ENCODE measurements at regions of chr2 and their contacts with region 1.

Region 1: GRCh38 chr2:121530212-121530705 is 421 bp upstream of the RNU4ATAC start:
- DNase-seq: peak in 1 of 2 donors; percentile 90
- ATAC-seq: peak; percentile 71 to 86 (median 73)
- H3K4me3 ChIP-seq: peak overlapping the region; percentile 97
- H3K4me3 Mint-ChIP-seq: peak overlapping the region; percentile 89
- H3K27ac ChIP-seq: peak overlapping the region; percentile 100
- H3K27ac Mint-ChIP-seq: peak overlapping the region; percentile 92 to 98
- H3K4me1 ChIP-seq: peaks cover 21% of the 10 kb centered on the region
- H3K4me1 Mint-ChIP-seq: peaks cover 35 to 44% of the 10 kb centered on the region in 2 donors
- H3K27me3 ChIP-seq: no peaks in the 10 kb centered on the region
- H3K27me3 Mint-ChIP-seq: no peaks in the 10 kb centered on the region
- CTCF ChIP-seq: no peak

Region 2: DNA sequence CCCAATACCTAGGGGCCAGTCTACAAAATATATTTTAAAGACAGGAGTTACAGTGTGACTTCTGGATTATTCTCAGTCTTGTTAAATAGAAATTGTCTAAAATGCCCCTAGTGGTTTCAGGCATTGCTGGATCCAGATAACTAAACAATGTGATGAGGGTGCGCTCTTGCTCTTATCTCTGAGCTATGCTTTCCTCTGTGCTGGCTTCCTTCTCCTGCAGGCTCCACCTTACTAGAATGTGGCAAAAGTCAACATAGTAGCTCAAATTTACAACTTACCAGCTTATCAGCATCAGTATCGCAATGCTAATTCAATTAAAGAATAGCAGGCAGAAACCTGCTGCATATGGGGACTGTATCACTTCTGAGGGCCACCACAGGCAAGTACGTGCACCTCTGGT is 60.9 kb before region 1 on chr2:
- intact Hi-C with region 1: loop called (anchors 2 kb)
- DNase-seq: no peak
- ATAC-seq: peak in 1 of 3 donors; percentile 9
- H3K4me3 ChIP-seq: no peak overlapping the region
- H3K4me3 Mint-ChIP-seq: peak overlapping the region; percentile 66
- H3K27ac ChIP-seq: peak overlapping the region; percentile 60
- H3K27ac Mint-ChIP-seq: peak overlapping the region; percentile 91 to 92
- H3K4me1 ChIP-seq: peaks cover 32% of the 10 kb centered on the region
- H3K4me1 Mint-ChIP-seq: peaks cover 69 to 77% of the 10 kb centered on the region in 2 donors
- H3K27me3 ChIP-seq: no peaks in the 10 kb centered on the region
- H3K27me3 Mint-ChIP-seq: no peaks in the 10 kb centered on the region
- CTCF ChIP-seq: no peak

Region 3: DNA sequence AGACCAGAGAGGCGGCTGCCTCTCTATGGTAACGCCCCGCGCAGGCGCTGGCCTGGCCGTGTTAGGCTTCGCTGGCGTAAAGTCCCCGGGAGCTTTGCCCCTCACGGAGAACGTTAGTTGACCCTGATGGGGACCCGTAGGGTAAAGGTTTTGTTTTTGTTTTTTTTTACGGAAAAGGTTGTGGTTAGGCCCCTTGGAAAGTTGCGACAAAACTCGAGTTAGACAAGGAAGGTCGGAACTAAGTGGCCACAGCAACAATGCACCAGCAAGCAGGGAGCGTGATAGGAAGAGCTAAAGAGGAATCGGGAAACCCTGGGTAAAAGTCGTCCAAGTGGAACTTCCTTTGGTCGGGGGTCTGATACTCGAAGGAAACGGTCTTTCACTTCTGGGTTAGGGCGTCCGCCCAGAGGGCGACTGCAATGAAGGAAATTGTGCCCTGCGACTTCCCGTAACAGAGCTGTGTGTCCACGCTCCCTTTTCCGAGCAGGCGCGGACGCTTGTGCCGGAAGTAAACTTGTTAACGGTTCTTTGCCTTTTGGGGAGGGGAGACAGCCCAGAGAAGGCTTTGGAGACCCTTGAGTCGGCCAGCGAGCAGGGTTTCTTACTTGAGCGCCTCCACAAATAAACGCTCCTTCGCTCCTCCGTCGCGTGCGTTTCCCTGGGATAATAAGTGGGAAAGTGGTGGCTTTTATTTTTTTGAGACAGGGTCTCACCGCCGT is 119.5 kb after region 1 on chr2:
- intact Hi-C with region 1: loop called (anchors 1 kb)
- DNase-seq: peak; percentile 92 to 99
- ATAC-seq: peak; percentile 89 to 97 (median 93)
- H3K4me3 ChIP-seq: peak overlapping the region; percentile 88
- H3K4me3 Mint-ChIP-seq: peak overlapping the region; percentile 100
- H3K27ac ChIP-seq: peak overlapping the region; percentile 99
- H3K27ac Mint-ChIP-seq: peak overlapping the region; percentile 99 to 100
- H3K4me1 ChIP-seq: peaks cover 17% of the 10 kb centered on the region
- H3K4me1 Mint-ChIP-seq: peaks cover 61 to 72% of the 10 kb centered on the region in 2 donors
- H3K27me3 ChIP-seq: no peaks in the 10 kb centered on the region
- H3K27me3 Mint-ChIP-seq: no peaks in the 10 kb centered on the region
- CTCF ChIP-seq: no peak

Region 4: DNA sequence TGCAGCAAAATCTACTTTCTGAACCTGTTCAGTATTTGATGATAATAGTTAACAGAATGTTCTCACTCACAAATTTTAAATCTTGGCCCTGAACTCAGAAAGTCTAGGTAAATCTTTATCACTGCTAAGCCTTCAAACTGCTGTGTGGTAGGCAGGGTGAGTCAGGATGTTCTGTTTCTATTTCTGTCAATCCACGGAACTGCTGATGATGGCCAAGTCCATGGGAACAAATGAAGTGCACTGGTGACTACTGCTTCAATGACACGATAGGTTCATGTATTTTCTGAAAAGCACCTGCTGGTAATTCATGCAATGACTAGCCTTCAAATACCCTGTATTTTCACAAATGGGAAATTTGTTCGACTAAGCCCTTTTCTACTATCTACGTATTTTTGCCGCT is 192.2 kb after region 1 on chr2:
- intact Hi-C with region 1: loop called (anchors 1 kb)
- DNase-seq: no peak
- ATAC-seq: no peak
- H3K4me3 ChIP-seq: no peak overlapping the region
- H3K4me3 Mint-ChIP-seq: no peak overlapping the region
- H3K27ac ChIP-seq: no peak overlapping the region
- H3K27ac Mint-ChIP-seq: no peak overlapping the region
- H3K4me1 ChIP-seq: peaks cover 8% of the 10 kb centered on the region
- H3K4me1 Mint-ChIP-seq: peaks cover 5% of the 10 kb centered on the region in 2 donors
- H3K27me3 ChIP-seq: no peaks in the 10 kb centered on the region
- H3K27me3 Mint-ChIP-seq: no peaks in the 10 kb centered on the region
- CTCF ChIP-seq: no peak

Region 5: GRCh38 chr2:121755236-121756111 is 225.2 kb after region 1 on chr2 and contains the start of gene TSN:
- intact Hi-C with region 1: loop called (anchors 1 kb)
- DNase-seq: peak; percentile 96 to 99
- ATAC-seq: peak; percentile 97 to 100 (median 98)
- H3K4me3 ChIP-seq: peak within 1 kb of the TSS; percentile 94
- H3K4me3 Mint-ChIP-seq: peak within 1 kb of the TSS; percentile 91
- H3K27ac ChIP-seq: peak within 1 kb of the TSS; percentile 75
- H3K27ac Mint-ChIP-seq: peak within 1 kb of the TSS; percentile 78 to 84
- H3K4me1 ChIP-seq: peaks cover 5% of the 10 kb centered on the region
- H3K4me1 Mint-ChIP-seq: peaks cover 19 to 25% of the 10 kb centered on the region in 2 donors
- H3K27me3 ChIP-seq: no peaks in the 10 kb centered on the region
- H3K27me3 Mint-ChIP-seq: no peaks in the 10 kb centered on the region
- CTCF ChIP-seq: no peak
- total RNA-seq, gene TSN: 54.7 to 66.9 (median 62.5) TPM